Right ventricle myocardium inferior (tissue), 1 donor: ENCODE measurements at regions of chr18 and their contacts with region 1.

Region 1: GRCh38 chr18:55422456-55423180 is 165.4 kb downstream of the TCF4 start:
- DNase-seq: no peak
- ATAC-seq: peak; percentile 63

Region 2: DNA sequence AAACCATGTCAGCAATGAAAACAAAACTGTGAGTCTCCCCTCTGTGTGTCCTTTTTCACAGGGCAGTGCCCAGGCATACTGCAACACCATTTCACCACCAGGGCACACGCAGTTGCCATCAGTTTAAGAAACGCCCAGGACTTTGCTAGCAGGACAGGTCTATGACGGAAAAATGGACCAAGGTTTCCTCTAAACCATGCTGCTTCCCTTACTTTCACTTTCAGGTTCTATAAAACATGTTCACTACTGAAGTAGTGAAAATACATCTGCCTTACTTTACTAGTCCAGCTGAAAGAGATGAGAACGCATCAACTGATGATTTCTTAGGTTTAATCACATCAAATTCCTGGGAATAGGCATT is 54.9 kb after region 1 on chr18:
- intact Hi-C with region 1: loop called (anchors 5 kb)
- DNase-seq: no peak
- ATAC-seq: peak; percentile 80

Region 3: DNA sequence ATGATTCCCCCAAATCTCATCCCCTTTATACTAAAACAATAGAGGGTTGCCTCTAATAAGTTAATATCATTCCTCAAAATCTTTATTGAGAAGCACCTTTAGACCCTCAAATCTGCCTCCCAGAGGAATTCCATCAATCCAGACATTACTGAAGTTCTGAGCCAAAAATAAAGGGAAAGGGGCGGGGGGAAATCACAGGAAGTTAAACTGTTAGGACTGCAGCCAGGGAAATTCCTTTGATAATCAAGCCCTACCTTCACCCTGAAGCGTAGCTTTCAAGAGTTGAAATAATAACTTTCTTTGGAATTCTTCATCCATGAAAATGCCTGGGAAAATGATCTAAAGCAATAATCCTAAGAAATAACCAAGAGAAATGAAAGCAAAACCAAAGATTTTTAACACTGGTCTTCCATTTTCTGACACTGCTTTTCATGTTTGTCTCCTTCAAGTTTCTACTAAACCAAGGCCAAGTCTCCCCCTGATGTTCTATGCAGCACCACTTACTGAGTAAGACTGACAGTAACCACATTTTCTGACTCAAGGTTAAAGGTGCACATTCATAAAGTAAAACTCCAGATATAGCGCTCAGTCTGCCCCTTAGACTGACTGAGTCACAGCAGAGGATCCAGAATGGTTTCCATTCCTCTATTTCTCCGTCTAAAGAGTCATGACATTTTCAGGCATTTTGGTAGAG is 87.2 kb after region 1 on chr18:
- intact Hi-C with region 1: loop called (anchors 5 kb)
- DNase-seq: no peak
- ATAC-seq: no peak